HEK293 (cell line): ENCODE measurements at regions of chr9 and their contacts with region 1.

Region 1: GRCh38 chr9:69199769-69200470 is 25.8 kb downstream of the TJP2 start:
- H3K4me3 ChIP-seq: no peak overlapping the region
- H3K27ac ChIP-seq: no peak overlapping the region
- H3K4me1 ChIP-seq: no peaks in the 10 kb centered on the region; the same call in 1 of the 2 replicates
- CTCF ChIP-seq: no peak

Region 2: GRCh38 chr9:68905129-68905528 is 294.8 kb before region 1 on chr9:
- CTCF ChIA-PET with region 1: no interaction called
- POLR2A ChIA-PET with region 1: no interaction called
- H3K4me3 ChIP-seq: no peak overlapping the region
- H3K27ac ChIP-seq: no peak overlapping the region
- H3K4me1 ChIP-seq: no peaks in the 10 kb centered on the region
- CTCF ChIP-seq: no peak

Region 3: DNA sequence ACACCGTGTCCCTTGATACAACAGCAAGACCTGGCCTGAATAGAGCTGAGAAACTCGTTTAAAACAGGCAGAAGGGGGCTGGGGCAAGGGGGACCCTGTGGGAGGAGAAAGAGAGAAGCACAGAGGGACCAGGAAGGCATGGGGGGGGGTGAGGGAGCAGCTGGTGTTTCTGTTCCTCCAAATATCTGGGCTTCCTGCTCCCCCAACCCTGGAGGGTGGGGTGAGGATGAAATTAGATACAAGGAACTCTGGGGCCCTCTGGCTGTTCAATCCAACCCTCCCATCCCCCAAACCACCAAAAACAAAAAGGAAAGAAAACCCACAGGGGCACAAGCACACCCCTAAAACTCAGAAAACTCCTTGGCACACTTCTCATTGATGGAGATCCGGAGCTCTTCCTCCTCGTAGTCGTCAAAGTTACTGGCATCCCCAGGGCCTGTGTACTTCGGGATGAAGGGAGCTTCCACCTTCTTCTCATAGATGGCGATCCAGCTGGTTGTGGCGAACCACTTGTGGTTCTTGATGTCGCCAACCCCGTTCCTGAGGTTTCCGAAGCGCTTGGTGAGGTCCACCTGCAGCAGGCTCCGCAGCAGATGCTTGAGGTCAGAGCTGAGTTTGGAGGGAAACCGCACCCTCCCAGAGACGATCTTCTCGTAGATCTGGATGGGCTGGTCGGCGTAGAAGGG is 187.1 kb before region 1 on chr9:
- CTCF ChIA-PET with region 1: no interaction called
- POLR2A ChIA-PET with region 1: no interaction called
- H3K4me3 ChIP-seq: no peak overlapping the region
- H3K27ac ChIP-seq: no peak overlapping the region
- H3K4me1 ChIP-seq: no peaks in the 10 kb centered on the region
- CTCF ChIP-seq: no peak

Region 4: DNA sequence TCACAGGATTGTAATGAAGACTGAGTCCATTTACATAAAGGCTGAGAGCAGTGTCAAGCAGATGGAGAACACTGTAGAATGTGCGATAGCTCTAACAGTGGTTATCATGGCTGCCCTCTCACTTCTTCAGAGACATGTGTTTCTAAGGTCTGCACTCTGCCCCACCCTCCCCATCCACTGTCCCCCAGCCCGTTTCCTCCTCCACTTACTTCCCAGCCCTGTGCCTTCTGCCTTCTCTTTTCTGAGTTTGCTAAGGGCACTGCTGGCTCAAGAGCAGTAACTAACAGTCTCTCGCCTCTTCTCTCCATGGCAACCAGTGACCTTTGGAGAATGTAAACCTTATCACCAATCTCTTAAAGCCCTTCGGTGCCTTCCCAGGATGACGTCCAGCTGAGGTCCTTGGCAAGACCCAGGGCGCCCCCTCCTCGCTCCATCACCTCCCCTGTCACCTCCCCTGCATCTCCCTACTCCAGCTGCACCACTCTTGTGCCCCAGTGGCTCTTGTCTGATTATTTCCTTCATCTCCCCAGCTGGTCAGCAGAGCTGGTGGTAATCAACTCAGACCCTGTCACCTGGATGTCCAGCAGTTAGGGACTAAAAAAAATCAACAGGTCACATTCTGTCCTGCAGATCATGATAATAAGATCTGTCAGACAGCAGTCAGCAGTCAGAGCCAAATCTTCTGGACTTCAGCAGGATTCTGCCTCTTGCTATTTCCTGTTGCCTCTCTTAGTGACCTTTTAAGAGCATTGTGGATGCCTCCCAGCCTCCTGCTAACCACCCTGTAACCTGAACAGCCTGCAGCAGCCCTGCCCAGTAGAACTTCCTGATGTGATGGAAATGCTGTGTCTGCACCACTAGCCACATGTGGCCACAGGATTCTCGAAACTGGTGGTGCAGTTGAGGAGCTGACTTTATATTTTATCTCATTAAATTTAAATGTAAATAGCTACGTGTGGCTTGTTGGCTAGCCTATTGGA is 155.4 kb before region 1 on chr9:
- CTCF ChIA-PET with region 1: interaction called, 209 read pairs
- POLR2A ChIA-PET with region 1: no interaction called
- H3K4me3 ChIP-seq: no peak overlapping the region
- H3K27ac ChIP-seq: no peak overlapping the region
- H3K4me1 ChIP-seq: peaks cover 3% of the 10 kb centered on the region; the same call in 1 of the 2 replicates
- CTCF ChIP-seq: no peak

Region 5: GRCh38 chr9:69223605-69224004 is 23.7 kb after region 1 on chr9:
- CTCF ChIA-PET with region 1: interaction called, 10 read pairs
- POLR2A ChIA-PET with region 1: no interaction called
- H3K4me3 ChIP-seq: no peak overlapping the region
- H3K27ac ChIP-seq: no peak overlapping the region
- H3K4me1 ChIP-seq: no peaks in the 10 kb centered on the region
- CTCF ChIP-seq: no peak